Sigmoid colon (tissue), 7 donors: ENCODE measurements at regions of chr20 and their contacts with region 1.

Region 1: DNA sequence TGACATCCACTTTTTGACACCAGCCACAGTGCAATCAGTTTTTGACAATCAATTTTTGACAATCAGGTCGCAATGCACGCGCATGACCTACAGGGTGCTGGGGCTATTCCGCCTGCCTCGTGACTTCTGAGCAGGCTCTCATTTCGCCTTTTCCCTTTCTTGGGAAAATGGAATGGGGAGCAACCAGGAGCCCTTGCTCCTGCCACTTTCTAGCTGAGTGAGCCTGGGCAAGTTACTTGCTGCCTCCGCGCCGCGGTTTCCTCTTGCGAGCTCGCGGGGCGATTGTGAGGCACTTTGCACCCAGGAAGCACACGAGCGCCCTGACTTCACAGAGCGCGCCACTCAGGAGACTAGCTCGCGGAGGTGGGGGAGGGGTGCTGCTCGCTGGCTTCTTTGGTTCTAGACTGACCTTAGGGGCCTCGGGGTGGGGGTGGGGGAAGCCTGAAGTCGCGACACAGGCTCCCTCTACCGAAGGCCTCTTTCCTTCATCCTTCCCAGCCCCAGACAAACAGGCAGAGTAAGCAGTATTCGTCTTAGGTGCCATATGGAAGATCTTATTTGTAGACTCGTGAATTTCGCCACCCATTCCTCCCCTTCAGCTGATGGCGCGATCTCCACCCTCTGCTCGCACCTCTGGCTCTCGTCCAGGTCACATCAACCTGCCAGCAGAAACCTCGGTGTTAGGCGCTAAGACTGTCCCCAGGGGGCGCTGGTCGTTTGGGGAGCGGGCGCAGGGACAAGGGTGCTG is 4.6 kb downstream of the TP53TG5 start:
- DNase-seq: peak; percentile 96
- H3K4me3 ChIP-seq: peak overlapping the region; percentile 26 to 55 (median 48)
- H3K27ac ChIP-seq: peak overlapping the region; percentile 77 to 92 (median 82)
- H3K4me1 ChIP-seq: peaks cover 0 to 19% (median 15%) of the 10 kb centered on the region in 4 donors
- H3K27me3 ChIP-seq: no peaks in the 10 kb centered on the region
- CTCF ChIP-seq: peak; percentile 81 to 97 (median 90)
- EP300 ChIP-seq: no peak
- POLR2A ChIP-seq: no peak

Region 2: DNA sequence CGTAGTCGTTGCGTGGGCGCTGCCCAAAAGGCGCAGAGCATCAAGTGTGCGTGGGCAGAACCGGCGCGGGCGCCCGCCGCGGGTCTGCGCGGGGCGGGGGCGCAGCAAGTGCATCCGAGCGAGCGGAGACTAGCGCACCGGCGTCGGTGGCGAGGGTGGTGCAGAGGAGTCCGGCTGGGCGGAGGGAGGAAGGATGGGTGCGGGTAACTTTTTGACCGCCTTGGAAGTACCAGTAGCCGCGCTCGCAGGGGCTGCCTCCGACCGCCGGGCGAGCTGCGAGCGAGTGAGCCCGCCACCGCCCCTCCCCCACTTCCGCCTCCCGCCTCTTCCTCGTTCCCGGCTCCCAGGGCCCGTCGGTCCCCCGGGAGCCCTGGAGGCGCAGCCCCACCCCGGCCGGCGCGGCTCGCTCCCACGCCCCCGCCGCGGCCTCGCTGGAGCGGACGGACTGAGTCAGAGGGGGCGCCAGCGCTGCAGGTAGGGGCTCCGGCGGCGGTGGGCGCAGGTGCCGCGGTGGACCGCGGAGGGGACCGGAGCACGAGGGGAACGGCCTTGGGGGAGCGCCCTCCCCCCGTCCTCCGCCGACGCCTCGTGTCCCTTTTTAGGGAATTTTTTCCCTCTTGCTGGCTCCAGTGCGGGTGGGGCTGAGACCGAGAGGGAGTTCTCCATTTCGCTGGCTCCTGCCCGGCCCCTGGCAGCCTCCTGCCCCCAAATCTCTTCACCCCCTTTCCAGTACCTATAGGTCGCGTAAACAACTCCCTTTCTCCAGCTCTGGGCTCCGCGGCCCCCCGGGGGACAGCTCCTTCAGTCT is 32.9 kb after region 1 on chr20:
- intact Hi-C with region 1: loop called (anchors 2 kb)
- DNase-seq: peak; percentile 91
- H3K4me3 ChIP-seq: peak overlapping the region; percentile 84 to 97 (median 92)
- H3K27ac ChIP-seq: peak overlapping the region; percentile 94 to 99 (median 97)
- H3K4me1 ChIP-seq: peaks cover 0 to 42% (median 25%) of the 10 kb centered on the region in 4 donors
- H3K27me3 ChIP-seq: no peaks in the 10 kb centered on the region
- CTCF ChIP-seq: no peak
- EP300 ChIP-seq: no peak
- POLR2A ChIP-seq: peak in 1 of 2 donors; percentile 9

Region 3: GRCh38 chr20:45436732-45437391 is 63.3 kb after region 1 on chr20:
- intact Hi-C with region 1: loop called (anchors 1 kb)
- DNase-seq: peak; percentile 93
- H3K4me3 ChIP-seq: peak overlapping the region; percentile 39 to 59 (median 54)
- H3K27ac ChIP-seq: peak overlapping the region; percentile 80 to 87 (median 86)
- H3K4me1 ChIP-seq: peaks cover 0 to 20% (median 7%) of the 10 kb centered on the region in 4 donors
- H3K27me3 ChIP-seq: no peaks in the 10 kb centered on the region
- CTCF ChIP-seq: peak; percentile 88 to 96 (median 93)
- EP300 ChIP-seq: no peak
- POLR2A ChIP-seq: peak in 1 of 2 donors; percentile 8

Region 4: GRCh38 chr20:45771182-45771759 is 397.7 kb after region 1 on chr20:
- intact Hi-C with region 1: loop called (anchors 2 kb)
- DNase-seq: peak; percentile 87
- H3K4me3 ChIP-seq: no peak overlapping the region
- H3K27ac ChIP-seq: peak overlapping the region; percentile 67 to 79 (median 75)
- H3K4me1 ChIP-seq: peaks cover 0 to 16% (median 10%) of the 10 kb centered on the region in 4 donors
- H3K27me3 ChIP-seq: no peaks in the 10 kb centered on the region
- CTCF ChIP-seq: peak; percentile 73 to 96 (median 90)
- EP300 ChIP-seq: no peak
- POLR2A ChIP-seq: no peak